Panc1 (cell line): ENCODE measurements at regions of chr12 and their contacts with region 1.

Region 1: GRCh38 chr12:10501031-10501430 is 4.7 kb upstream of the EIF2S3B start:
- DNase-seq: peak; percentile 15
- ATAC-seq: no peak
- H3K4me3 ChIP-seq: no peak overlapping the region
- H3K27ac ChIP-seq: peak overlapping the region; percentile 77; the same call in 1 of the 2 replicates
- H3K4me1 ChIP-seq: peaks cover 4% of the 10 kb centered on the region; the same call in 1 of the 2 replicates
- H3K27me3 ChIP-seq: no peaks in the 10 kb centered on the region
- CTCF ChIP-seq: peak; percentile 50; the same call in 1 of the 2 replicates

Region 2: DNA sequence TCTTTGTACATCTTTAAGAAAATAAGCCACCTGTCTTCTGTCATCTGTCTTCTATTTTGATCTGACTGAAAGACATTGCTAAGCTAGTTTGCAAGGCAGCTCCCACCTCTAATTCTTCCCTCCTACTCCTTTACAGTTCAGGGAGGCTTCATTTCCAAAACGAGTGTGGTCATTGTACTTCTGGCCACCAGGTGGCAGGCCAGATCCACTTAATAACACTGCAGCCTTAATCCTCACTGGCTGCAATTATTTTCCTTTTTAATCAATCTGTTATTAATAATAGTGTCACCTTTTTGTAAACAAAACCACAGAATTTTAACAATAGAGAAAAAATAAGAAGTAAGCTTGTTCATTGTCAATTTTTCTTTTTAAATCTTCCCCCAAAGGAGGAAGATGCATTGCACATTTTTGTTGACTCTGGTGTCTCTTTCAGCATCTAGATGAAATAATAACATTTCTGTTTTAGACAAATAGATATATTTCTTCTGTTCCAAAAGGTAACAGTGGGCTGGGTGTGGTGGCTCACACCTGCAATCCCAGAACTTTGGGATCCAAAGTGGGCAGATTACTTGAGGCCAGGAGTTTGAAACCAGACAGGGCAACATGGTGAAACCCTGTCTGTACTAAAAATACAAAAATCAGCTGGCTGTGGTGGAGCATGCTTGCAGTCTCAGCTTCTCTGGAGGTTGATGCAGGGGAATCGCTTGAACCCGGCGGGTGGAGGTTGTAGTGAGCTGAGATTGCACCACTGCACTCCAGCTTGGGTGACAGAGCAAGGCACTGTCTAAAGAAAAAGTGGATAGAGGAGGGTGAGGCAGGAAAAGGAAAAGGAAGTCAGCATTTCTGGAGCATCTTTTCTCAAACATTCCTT is 265.0 kb before region 1 on chr12:
- CTCF ChIA-PET with region 1: no interaction called
- POLR2A ChIA-PET with region 1: no interaction called
- in situ Hi-C with region 1: no loop called
- intact Hi-C with region 1: loop called (anchors 2 kb)
- DNase-seq: no peak
- ATAC-seq: peak; percentile 83
- H3K4me3 ChIP-seq: no peak overlapping the region
- H3K27ac ChIP-seq: peak overlapping the region; percentile 21; the same call in 1 of the 2 replicates
- H3K4me1 ChIP-seq: no peaks in the 10 kb centered on the region
- H3K27me3 ChIP-seq: no peaks in the 10 kb centered on the region
- CTCF ChIP-seq: peak; percentile 76

Region 3: DNA sequence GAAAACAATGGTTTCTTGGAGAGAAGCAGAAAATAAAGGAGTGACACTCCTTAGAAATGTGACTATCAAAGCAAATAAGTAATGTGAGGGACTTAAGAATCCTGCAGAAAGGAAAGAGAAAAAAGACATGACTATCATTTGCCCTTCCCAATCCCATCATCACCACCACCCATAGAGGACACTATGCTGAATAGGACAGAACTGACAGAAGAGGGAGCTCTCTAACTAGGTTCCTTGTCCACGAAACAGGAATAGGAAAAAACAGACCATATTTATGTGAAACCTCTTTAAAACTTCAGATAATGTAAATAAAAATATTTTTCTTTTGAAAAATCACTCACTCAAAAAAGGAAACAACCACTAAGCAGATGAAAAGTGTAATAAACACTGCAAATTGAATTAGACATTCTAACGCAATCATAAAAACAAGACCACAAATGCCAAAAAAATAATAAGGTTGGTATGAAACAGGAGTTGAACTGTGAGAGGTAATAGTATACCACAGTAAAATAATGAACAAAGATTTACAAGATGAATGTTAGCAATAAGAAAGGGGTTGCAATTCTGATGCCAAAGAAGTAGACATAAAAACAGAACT is 169.3 kb before region 1 on chr12:
- CTCF ChIA-PET with region 1: no interaction called
- POLR2A ChIA-PET with region 1: no interaction called
- in situ Hi-C with region 1: no loop called
- intact Hi-C with region 1: loop called (anchors 5 kb)
- DNase-seq: peak; percentile 32
- ATAC-seq: peak; percentile 85
- H3K4me3 ChIP-seq: no peak overlapping the region
- H3K27ac ChIP-seq: peak overlapping the region; percentile 39; the same call in 1 of the 2 replicates
- H3K4me1 ChIP-seq: no peaks in the 10 kb centered on the region
- H3K27me3 ChIP-seq: no peaks in the 10 kb centered on the region
- CTCF ChIP-seq: peak; percentile 63; the same call in 1 of the 2 replicates

Region 4: DNA sequence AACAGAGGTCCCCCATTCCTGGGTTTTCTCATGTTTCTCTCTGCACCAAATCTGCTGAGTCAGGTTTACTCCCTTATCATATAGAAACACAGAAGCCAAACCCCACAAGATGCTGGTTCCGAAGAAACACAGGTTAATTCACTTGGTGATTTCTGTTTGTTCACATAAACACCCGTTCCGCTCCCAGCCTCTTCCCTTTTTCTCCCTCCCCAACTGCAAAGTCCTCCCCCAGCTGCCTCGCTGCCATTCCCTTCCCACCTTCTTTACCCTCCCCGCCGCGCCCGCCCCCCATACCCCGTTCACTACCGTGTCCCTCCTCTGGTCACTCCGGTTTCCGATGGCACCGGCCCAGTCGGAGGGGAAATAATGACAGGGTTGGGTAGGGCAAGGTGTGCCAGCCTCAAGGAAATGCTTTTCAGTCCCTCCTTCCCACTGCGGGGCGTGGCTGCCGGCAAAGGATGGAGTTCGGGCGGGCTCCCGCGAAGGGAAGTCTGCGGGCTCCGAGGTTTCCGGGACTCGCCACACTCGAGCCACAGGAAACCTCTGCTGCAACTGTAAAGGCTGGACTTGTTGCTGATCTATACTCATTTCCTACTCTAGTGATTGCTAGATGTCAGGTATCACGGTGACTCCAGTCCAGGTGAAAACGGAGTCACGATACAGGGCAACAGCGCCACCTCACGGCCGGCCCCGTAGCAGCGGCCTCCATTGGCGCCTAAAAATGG is 172.8 kb after region 1 on chr12 and contains the start of gene STYK1:
- CTCF ChIA-PET with region 1: no interaction called
- POLR2A ChIA-PET with region 1: no interaction called
- in situ Hi-C with region 1: no loop called
- intact Hi-C with region 1: no loop called
- DNase-seq: peak; percentile 42
- ATAC-seq: peak; percentile 92
- H3K4me3 ChIP-seq: peak within 1 kb of the TSS; percentile 56 to 68
- H3K27ac ChIP-seq: no peak within 1 kb of the TSS
- H3K4me1 ChIP-seq: no peaks in the 10 kb centered on the region
- H3K27me3 ChIP-seq: no peaks in the 10 kb centered on the region; the same call in 1 of the 2 replicates
- CTCF ChIP-seq: peak; percentile 92
- total RNA-seq, gene STYK1: 0.85 TPM